GM18951 (cell line): ENCODE measurements at regions of chr12 and their contacts with region 1.

Region 1: DNA sequence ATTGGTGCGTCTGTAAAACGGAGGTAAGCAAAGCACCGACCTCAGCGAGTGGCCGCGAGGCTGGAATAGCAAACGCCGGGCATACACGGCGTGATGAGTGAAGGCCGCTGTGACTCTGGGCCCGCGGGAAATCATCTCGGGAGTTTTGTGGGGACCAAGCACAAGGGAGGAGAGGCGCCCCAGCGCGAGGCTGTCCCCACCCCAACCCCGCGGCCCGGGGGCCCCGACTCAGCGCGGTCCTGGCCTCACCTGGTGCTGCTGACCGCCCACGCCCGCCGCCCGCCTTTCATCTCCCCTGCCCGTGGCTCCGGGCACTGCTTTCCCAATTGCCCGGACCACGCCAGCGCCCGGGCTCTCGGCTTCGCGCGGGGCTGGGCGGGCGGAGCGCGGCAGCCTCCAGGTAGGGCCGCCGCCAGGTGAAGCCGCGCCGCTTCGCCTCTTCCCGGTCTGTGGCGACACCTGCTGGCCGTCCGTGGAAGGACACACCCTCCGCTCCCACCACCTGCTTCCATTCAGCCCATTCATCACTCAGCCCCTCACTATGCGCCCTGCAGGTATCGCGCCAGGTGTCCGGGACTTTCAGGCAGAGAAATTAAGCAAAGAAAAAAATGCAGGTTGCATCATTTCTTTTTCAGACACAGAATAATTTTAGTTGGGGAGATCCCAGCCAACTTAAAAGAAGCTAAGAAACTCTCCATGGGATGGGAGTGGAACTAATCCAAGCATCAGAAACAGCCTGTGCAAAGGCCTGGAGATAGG is 360.4 kb downstream of the MED13L start:
- POLR2A ChIP-seq: no peak

Region 2: GRCh38 chr12:113980537-113981337 is 1936.4 kb before region 1 on chr12:
- in situ Hi-C with region 1: loop called (anchors 25 kb)
- POLR2A ChIP-seq: no peak

Region 3: GRCh38 chr12:114625294-114625851 is 1291.7 kb before region 1 on chr12:
- in situ Hi-C with region 1: loop called (anchors 25 kb)
- POLR2A ChIP-seq: no peak

Region 4: DNA sequence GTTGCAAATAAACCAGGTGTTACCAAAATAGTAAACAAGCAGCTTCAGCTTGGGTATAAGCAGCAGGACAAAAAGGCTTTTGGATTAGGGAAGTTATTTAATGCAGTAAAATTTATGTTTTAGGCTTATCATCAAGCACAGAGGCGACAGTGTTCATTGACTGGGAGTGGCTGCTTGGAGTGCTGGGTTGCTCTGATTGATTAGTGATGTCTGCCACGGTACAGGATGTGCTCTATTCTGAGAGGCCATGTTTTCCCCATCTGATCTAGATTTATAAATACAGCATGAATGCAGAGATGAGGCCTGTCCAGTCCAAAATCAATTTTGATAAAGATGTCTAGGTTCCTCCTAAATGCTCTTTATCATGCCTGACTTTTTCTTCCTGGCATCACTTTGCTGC is 725.6 kb after region 1 on chr12:
- in situ Hi-C with region 1: no loop called
- POLR2A ChIP-seq: no peak